Calu3 (cell line): ENCODE measurements at regions of chr1 and their contacts with region 1.

Region 1: GRCh38 chr1:236142253-236143103 is at the start of gene GPR137B:
- DNase-seq: peak; percentile 53
- H3K4me3 Mint-ChIP-seq: peak within 1 kb of the TSS; percentile 95
- H3K27ac Mint-ChIP-seq: peak within 1 kb of the TSS; percentile 88
- H3K4me1 Mint-ChIP-seq: peaks cover 24% of the 10 kb centered on the region
- H3K27me3 Mint-ChIP-seq: peaks cover 59% of the 10 kb centered on the region
- CTCF ChIP-seq: no peak
- total RNA-seq, gene GPR137B: 9.5 and 11.4 TPM in 2 replicates

Region 2: GRCh38 chr1:236281654-236282424 is 139.4 kb after region 1 on chr1 and contains the start of gene ERO1B:
- CTCF ChIA-PET with region 1: no interaction called
- intact Hi-C with region 1: loop called (anchors 10 kb)
- DNase-seq: peak; percentile 98
- H3K4me3 Mint-ChIP-seq: peak within 1 kb of the TSS; percentile 70
- H3K27ac Mint-ChIP-seq: peak within 1 kb of the TSS; percentile 54
- H3K4me1 Mint-ChIP-seq: peaks cover 23% of the 10 kb centered on the region
- H3K27me3 Mint-ChIP-seq: peaks cover 42% of the 10 kb centered on the region
- CTCF ChIP-seq: no peak
- total RNA-seq, gene ERO1B: 4.4 and 6.4 TPM in 2 replicates